Posterior vena cava (tissue), 2 donors: ENCODE measurements at regions of chr12 and their contacts with region 1.

Region 1: GRCh38 chr12:108731105-108731865 is at the start of gene CORO1C:
- DNase-seq: peak; percentile 99
- total RNA-seq, gene CORO1C: 361 to 548 TPM

Region 2: GRCh38 chr12:108562348-108563135 is 168.7 kb before region 1 on chr12 and contains the start of gene ISCU:
- intact Hi-C with region 1: loop called in 1 of 2 experiments (anchors 10 kb)
- DNase-seq: peak; percentile 100
- total RNA-seq, gene ISCU: 113 to 119 TPM

Region 3: GRCh38 chr12:108689314-108690190 is 41.7 kb before region 1 on chr12:
- intact Hi-C with region 1: loop called in 1 of 2 experiments (anchors 1 kb)
- DNase-seq: no peak

Region 4: GRCh38 chr12:108784270-108784669 is 53.0 kb after region 1 on chr12:
- intact Hi-C with region 1: loop called in 1 of 2 experiments (anchors 5 kb)
- DNase-seq: no peak